A673 (cell line): ENCODE measurements at regions of chr4 and their contacts with region 1.

Region 1: GRCh38 chr4:83771113-83771705 is 235.3 kb downstream of the GPAT3 start:
- DNase-seq: peak; percentile 65
- H3K4me3 ChIP-seq: no peak overlapping the region
- H3K27ac ChIP-seq: no peak overlapping the region
- H3K4me1 ChIP-seq: peaks cover 6% of the 10 kb centered on the region
- H3K27me3 ChIP-seq: no peaks in the 10 kb centered on the region
- CTCF ChIP-seq: peak; percentile 70

Region 2: DNA sequence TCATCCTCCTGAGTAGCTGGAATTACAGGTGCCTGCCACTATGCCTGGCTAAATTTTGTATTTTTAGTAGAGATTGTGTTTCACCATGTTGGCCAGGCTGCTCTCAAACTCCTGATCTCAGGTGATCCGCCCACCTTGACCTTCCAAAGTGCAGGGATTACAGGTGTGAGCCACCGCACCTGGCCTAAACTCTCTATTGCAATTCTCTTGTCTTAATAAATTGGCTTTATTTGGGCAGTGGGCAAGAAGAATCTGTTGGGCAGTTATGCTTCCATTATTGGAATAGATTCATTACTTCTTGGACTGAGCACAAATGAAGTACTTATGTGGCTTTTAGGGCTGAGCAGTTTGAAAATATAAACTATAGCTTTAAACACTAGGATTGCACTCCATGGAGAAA is 243.5 kb before region 1 on chr4:
- CTCF ChIA-PET with region 1: no interaction called
- POLR2A ChIA-PET with region 1: no interaction called
- intact Hi-C with region 1: no loop called
- DNase-seq: no peak
- H3K4me3 ChIP-seq: no peak overlapping the region
- H3K27ac ChIP-seq: no peak overlapping the region
- H3K4me1 ChIP-seq: no peaks in the 10 kb centered on the region
- H3K27me3 ChIP-seq: no peaks in the 10 kb centered on the region
- CTCF ChIP-seq: no peak

Region 3: DNA sequence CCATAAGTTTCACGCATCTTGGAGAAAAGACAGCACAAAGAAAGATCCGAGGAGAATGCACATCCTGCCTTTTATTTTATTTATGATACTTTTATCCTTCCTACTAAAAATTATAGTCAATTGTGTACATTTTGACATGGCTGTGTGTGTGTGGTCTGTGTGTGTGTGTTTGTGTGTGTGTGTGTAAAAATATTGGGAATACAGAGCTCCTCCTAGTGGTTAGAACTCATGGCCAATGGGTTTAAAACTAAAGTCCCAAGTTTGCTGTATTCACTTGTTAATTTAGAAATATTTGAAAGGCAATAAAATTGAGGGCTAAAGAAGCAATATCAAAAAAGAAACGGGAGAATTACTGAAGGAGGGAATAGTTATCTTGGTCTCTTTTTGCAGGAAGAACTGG is 680.3 kb after region 1 on chr4:
- CTCF ChIA-PET with region 1: no interaction called
- POLR2A ChIA-PET with region 1: no interaction called
- intact Hi-C with region 1: no loop called
- DNase-seq: peak; percentile 7
- H3K4me3 ChIP-seq: no peak overlapping the region
- H3K27ac ChIP-seq: no peak overlapping the region
- H3K4me1 ChIP-seq: no peaks in the 10 kb centered on the region
- H3K27me3 ChIP-seq: no peaks in the 10 kb centered on the region
- CTCF ChIP-seq: peak; percentile 60

Region 4: GRCh38 chr4:84503495-84504437 is 732.6 kb after region 1 on chr4:
- CTCF ChIA-PET with region 1: no interaction called
- POLR2A ChIA-PET with region 1: no interaction called
- intact Hi-C with region 1: loop called (anchors 5 kb)
- DNase-seq: peak; percentile 70
- H3K4me3 ChIP-seq: no peak overlapping the region
- H3K27ac ChIP-seq: no peak overlapping the region
- H3K4me1 ChIP-seq: no peaks in the 10 kb centered on the region
- H3K27me3 ChIP-seq: no peaks in the 10 kb centered on the region
- CTCF ChIP-seq: peak; percentile 65